ENCODE measurements at regions of chr5 and their contacts with region 1.

Region 1: GRCh38 chr5:59367791-59368394 is 525.6 kb downstream of the PDE4D start:
- DNase-seq: peak; percentile 54
- ATAC-seq: peak; percentile 78; the same call in 1 of the 2 replicates
- H3K4me3 ChIP-seq: no peak overlapping the region
- H3K27ac ChIP-seq: no peak overlapping the region
- H3K4me1 ChIP-seq: no peaks in the 10 kb centered on the region
- H3K27me3 ChIP-seq: no peaks in the 10 kb centered on the region
- CTCF ChIP-seq: peak; percentile 83

Region 2: DNA sequence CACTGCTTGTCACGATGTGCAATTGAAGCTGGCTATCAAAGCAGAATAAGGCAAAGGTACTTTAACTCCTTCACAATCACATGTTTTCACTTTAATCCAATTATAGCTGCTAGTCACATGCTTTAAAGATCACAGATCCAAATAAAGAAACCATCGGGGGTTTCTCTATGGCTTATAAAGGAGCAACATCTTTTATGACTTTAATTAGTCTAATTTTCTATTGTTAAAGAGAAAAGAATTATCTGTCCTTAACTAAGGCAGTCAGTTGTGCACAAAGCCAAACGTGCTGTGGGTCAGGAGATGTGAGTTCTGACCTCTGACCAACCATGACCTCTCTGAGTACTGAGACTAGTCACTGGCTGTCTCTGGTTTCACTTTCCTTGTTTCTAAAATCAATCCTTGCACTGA is 224.0 kb before region 1 on chr5:
- CTCF ChIA-PET with region 1: no interaction called
- POLR2A ChIA-PET with region 1: no interaction called
- in situ Hi-C with region 1: no loop called
- intact Hi-C with region 1: no loop called
- DNase-seq: no peak
- ATAC-seq: no peak
- H3K4me3 ChIP-seq: no peak overlapping the region
- H3K27ac ChIP-seq: no peak overlapping the region
- H3K4me1 ChIP-seq: no peaks in the 10 kb centered on the region
- H3K27me3 ChIP-seq: no peaks in the 10 kb centered on the region
- CTCF ChIP-seq: no peak

Region 3: GRCh38 chr5:59188419-59189225 is 179.3 kb before region 1 on chr5:
- CTCF ChIA-PET with region 1: no interaction called
- POLR2A ChIA-PET with region 1: no interaction called
- in situ Hi-C with region 1: no loop called
- intact Hi-C with region 1: loop called (anchors 2 kb)
- DNase-seq: no peak
- ATAC-seq: peak; percentile 87
- H3K4me3 ChIP-seq: no peak overlapping the region
- H3K27ac ChIP-seq: no peak overlapping the region
- H3K4me1 ChIP-seq: no peaks in the 10 kb centered on the region; the same call in 1 of the 2 replicates
- H3K27me3 ChIP-seq: peaks cover 4% of the 10 kb centered on the region; the same call in 1 of the 2 replicates
- CTCF ChIP-seq: peak; percentile 79

Region 4: GRCh38 chr5:59218424-59219045 is 149.4 kb before region 1 on chr5:
- CTCF ChIA-PET with region 1: interaction called, 3 read pairs
- POLR2A ChIA-PET with region 1: no interaction called
- in situ Hi-C with region 1: no loop called
- intact Hi-C with region 1: loop called (anchors 10 kb)
- DNase-seq: no peak
- ATAC-seq: no peak
- H3K4me3 ChIP-seq: no peak overlapping the region
- H3K27ac ChIP-seq: no peak overlapping the region
- H3K4me1 ChIP-seq: no peaks in the 10 kb centered on the region
- H3K27me3 ChIP-seq: no peaks in the 10 kb centered on the region
- CTCF ChIP-seq: no peak